BJ (cell line): ENCODE measurements at regions of chr9 and their contacts with region 1.

Region 1: GRCh38 chr9:100216178-100216787 is 117.2 kb downstream of the INVS start:
- DNase-seq: no peak
- H3K4me3 ChIP-seq: no peak overlapping the region
- H3K27me3 ChIP-seq: no peaks in the 10 kb centered on the region
- CTCF ChIP-seq: peak; percentile 58

Region 2: DNA sequence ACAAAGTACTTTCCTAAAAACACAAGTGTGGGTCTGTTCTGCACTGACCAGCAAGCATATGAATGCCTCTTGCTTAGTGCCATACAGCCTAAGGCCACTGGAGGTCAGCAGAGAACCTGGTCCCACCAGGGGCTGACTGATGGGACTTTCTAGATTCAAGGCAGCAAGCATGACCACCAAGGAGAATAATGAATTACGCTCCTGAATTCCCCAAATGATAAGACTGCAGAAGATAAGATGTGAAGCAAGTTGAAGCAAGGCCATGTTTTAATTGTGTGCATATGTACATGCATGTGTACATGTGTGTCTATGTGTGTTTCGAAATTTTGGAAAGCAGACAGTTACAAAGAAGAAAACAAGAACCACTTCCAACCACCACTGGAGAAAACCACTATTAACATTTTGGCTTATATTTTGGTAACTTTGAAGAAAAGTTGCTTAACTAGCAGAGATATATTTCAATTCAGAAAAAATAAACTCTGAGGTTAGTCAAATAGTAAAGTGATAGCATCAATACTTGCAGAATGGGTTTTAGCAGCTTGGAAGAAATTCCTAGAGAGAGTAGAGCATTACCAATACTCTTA is 188.0 kb before region 1 on chr9:
- CTCF ChIA-PET with region 1: interaction called, 12 read pairs
- POLR2A ChIA-PET with region 1: no interaction called
- DNase-seq: peak; percentile 17
- H3K4me3 ChIP-seq: no peak overlapping the region
- H3K27me3 ChIP-seq: no peaks in the 10 kb centered on the region
- CTCF ChIP-seq: peak; percentile 98